ENCODE measurements at regions of chrX and their contacts with region 1.

Region 1: GRCh38 chrX:120499301-120500072 is 30.4 kb upstream of the LAMP2 start:
- DNase-seq: no peak
- H3K4me3 Mint-ChIP-seq: no peak overlapping the region
- H3K27ac Mint-ChIP-seq: no peak overlapping the region
- H3K4me1 Mint-ChIP-seq: peaks cover 6% of the 10 kb centered on the region
- H3K27me3 Mint-ChIP-seq: no peaks in the 10 kb centered on the region

Region 2: DNA sequence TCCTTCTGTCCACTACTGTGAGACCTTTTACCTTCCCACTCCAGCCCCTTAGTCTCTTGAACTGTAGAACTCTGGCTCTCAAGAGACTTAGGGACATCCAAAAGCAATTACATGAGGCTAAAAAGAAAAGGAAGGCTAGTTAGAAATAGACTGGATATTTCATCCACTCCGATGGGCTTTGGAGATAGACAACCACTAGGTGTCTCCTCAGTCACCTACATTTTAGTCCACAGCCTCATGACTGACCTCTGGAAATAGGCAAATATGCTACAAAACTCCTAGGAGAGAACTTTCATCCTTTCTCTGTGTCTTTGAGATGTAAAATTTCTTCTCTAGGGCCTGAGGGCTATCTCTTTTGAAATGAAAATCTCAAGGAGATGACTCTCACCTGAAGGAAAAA is 14.7 kb after region 1 on chrX:
- intact Hi-C with region 1: no loop called
- DNase-seq: no peak
- H3K4me3 Mint-ChIP-seq: no peak overlapping the region
- H3K27ac Mint-ChIP-seq: no peak overlapping the region
- H3K4me1 Mint-ChIP-seq: no peaks in the 10 kb centered on the region
- H3K27me3 Mint-ChIP-seq: no peaks in the 10 kb centered on the region

Region 3: DNA sequence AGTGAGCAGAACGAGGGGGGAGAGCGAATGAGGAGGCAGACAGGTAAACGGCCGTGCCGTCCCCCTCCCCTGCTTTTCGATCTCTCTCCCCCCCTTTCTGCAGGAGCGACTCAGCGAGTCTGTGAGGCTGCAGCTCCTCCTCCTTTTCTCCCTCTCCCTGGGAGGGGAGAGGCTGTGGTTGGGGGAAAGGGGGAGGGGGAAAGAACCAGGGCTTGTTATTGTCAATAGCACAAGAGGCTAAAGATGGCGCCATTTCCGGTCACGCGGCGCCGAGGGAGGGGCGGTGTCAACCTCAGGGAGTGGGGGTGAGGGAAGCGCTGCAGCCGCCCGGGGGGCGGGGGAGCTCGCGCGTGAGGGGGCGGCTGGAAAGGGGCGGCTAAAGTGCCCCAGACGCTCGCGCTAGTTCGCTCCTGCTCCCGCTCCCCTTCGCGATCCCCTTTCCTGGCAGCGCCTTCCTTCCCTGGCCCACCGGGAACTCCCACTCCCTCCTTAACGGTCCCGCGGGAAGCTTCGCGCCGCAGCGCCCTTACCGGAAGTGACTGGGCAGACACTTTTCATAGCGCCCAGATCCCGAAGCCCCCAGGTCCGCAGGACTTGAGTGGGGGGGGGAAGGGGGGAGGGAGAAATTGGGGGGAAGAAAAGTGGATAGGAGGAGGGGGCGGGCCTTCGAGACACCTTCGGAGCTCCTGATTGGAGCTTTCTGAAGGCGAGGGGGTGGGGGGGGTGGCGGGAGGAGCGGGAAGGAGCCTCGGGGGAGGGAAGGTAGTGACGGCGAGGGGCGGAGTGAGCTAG is 61.6 kb after region 1 on chrX and contains the start of gene CUL4B:
- intact Hi-C with region 1: loop called (anchors 1 kb)
- DNase-seq: peak; percentile 89
- H3K4me3 Mint-ChIP-seq: peak within 1 kb of the TSS; percentile 99
- H3K27ac Mint-ChIP-seq: peak within 1 kb of the TSS; percentile 97
- H3K4me1 Mint-ChIP-seq: peaks cover 30% of the 10 kb centered on the region
- H3K27me3 Mint-ChIP-seq: no peaks in the 10 kb centered on the region
- total RNA-seq, gene CUL4B: 25.2 and 26.5 TPM in 2 replicates

Region 4: DNA sequence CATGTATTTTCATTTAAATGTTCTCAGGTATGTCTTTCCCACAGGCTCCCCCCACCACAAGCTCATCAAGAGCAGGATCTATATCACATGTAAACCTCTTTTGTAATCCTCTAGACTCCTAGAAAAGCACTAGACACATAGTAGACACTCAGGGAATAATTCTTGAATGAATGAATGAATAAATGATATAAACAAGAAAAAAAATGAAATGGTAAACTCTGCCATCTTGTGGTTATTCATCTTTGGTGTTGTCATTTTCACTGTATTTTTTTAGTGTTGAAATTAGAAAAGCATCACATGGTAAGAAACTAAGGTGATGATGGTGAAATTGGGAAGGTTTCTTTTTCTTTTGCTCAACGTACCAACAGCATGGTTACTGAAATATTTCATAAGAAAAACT is 164.6 kb after region 1 on chrX:
- intact Hi-C with region 1: loop called (anchors 1 kb)
- DNase-seq: no peak
- H3K4me3 Mint-ChIP-seq: no peak overlapping the region
- H3K27ac Mint-ChIP-seq: no peak overlapping the region
- H3K4me1 Mint-ChIP-seq: no peaks in the 10 kb centered on the region
- H3K27me3 Mint-ChIP-seq: no peaks in the 10 kb centered on the region

Region 5: DNA sequence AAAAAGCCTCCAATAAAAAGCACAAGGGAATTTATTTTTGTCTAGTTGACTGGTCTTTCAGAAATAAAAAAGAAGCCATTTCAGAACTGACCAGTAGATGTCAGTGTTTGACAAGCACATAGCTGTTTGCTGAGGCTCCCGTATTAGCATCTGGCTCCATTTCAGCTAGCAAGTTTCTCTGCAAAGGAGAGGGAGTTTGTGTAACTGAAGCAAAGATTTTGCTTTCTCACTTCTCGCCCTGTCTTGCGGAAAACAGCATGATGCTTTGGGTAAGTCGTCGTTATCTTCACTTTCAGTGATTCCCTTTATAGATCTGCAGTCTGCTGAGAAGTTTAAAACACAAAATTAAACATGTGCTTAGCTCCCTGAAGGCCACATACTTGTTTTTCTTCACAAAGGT is 290.6 kb after region 1 on chrX:
- intact Hi-C with region 1: loop called (anchors 5 kb)
- DNase-seq: peak; percentile 1
- H3K4me3 Mint-ChIP-seq: peak overlapping the region; percentile 25
- H3K27ac Mint-ChIP-seq: peak overlapping the region; percentile 56
- H3K4me1 Mint-ChIP-seq: peaks cover 21% of the 10 kb centered on the region
- H3K27me3 Mint-ChIP-seq: no peaks in the 10 kb centered on the region

Region 6: GRCh38 chrX:121579016-121579760 is 1079.7 kb after region 1 on chrX:
- intact Hi-C with region 1: loop called (anchors 10 kb)
- DNase-seq: no peak
- H3K4me3 Mint-ChIP-seq: no peak overlapping the region
- H3K27ac Mint-ChIP-seq: peak overlapping the region; percentile 61
- H3K4me1 Mint-ChIP-seq: no peaks in the 10 kb centered on the region
- H3K27me3 Mint-ChIP-seq: no peaks in the 10 kb centered on the region